Aorta (tissue), 5 donors: ENCODE measurements at regions of chr4 and their contacts with region 1.

Region 1: DNA sequence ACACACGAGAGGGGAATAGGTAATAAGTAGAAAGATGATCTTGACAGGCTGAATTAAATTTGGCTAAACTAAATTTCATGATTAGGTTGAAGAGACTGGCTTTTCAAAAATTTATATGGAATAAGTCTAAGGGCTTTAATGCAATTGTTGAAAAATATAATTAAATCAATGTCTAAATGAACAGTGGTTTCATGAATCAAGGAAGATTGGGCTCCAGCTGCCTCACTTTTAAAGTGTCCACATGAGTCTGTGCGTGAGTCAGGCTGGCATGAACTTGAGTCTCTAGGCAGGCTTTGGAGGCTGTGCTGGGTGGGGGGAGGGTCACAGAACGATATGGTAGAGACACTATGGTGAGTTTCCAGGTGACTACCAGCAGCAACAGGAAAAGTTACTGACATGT is 111.9 kb downstream of the SORBS2 start:
- DNase-seq: peak in 1 of 2 donors; percentile 80
- ATAC-seq: no peak
- H3K4me3 ChIP-seq: no peak overlapping the region
- H3K27ac ChIP-seq: peak overlapping the region; percentile 82 to 96
- H3K4me1 ChIP-seq: peaks cover 1 to 5% of the 10 kb centered on the region in 2 donors
- H3K27me3 ChIP-seq: no peaks in the 10 kb centered on the region

Region 2: DNA sequence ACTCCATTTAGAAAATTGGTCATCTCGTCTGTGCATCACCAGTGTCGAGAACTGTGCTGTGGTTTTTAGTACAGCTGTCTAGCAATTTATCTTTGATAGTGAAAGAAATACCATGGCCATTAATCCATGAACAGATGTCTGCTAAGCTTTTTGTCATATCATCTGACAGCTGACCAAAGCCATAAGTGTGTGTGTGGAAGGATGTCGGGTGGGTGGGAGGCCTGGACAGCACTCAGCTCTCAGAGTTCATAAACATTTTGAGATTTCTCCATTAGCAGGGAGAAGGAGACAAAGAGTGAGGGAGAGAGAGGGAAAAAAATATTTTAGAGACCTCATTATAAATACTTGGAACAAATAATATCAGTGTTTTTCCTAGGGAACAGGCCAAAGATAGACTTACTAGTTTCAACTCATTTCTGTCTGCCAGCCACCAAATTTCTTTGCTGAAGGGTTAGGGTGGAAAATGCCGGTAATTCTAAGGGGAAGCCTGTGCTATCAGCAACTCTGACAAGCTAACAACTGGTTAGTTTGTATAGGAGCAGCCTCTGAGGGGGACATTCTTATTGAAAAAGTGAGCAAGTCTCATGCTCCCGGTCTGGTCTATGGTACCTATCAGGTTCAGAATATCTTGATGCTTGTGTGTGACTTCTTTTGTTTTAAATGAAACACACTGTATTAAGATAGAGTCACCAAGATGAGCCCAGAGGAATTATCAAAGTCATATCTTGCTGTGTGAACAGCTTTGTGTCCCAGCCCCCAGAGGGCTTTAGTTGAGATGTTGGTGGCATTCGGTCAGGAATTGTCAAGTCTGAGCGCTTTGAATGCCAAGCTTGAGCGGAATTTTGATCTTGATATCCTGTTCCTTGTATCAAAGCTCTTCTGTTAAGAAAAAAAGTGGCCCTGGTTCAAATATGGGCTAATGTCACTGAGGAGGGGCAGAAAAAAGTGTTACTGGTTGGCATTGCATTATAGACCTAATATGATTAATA is 122.8 kb before region 1 on chr4:
- intact Hi-C with region 1: no loop called
- DNase-seq: no peak
- ATAC-seq: peak; percentile 39
- H3K4me3 ChIP-seq: no peak overlapping the region
- H3K27ac ChIP-seq: peak overlapping the region; percentile 92 to 97
- H3K4me1 ChIP-seq: peaks cover 0 to 2% of the 10 kb centered on the region in 2 donors
- H3K27me3 ChIP-seq: no peaks in the 10 kb centered on the region

Region 3: DNA sequence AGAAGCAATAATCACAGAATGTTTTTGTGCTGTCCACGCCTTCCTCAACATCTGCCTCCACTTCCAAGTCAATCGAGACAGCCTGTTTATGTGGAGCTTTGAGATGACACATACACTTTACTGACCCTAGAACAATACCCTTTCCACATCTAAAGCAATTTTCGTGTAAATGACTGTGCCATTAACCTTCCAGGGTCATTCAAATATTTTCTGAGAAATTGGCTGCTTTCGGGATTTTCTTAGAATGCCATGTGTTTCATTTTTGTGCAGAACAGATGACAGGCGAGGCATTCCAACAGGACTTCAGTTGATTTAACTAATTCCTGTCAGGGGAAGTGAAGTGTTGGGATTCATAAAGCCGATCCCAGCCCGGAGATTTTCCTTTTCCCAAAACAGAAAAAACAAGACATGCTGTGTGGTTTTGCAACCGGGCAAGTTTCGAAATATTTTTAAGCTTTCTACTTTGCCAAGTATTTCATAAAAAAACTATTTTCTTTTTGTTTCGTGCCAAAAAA is 38.0 kb after region 1 on chr4:
- intact Hi-C with region 1: loop called in 1 of 2 experiments (anchors 5 kb)
- DNase-seq: no peak
- ATAC-seq: peak; percentile 74
- H3K4me3 ChIP-seq: no peak overlapping the region
- H3K27ac ChIP-seq: peak overlapping the region; percentile 54 to 81
- H3K4me1 ChIP-seq: peaks cover 1 to 6% of the 10 kb centered on the region in 2 donors
- H3K27me3 ChIP-seq: no peaks in the 10 kb centered on the region